ENCODE measurements at regions of chr14 and their contacts with region 1.

Region 1: GRCh38 chr14:93619176-93619793 is 169.0 kb downstream of the PRIMA1 start:
- DNase-seq: peak in 1 of 2 donors; percentile 45
- ATAC-seq: peak in 2 of 8 donors; percentile 42 to 44
- H3K4me3 ChIP-seq: no peak overlapping the region
- H3K27ac ChIP-seq: no peak overlapping the region
- H3K4me1 ChIP-seq: no peaks in the 10 kb centered on the region
- H3K27me3 ChIP-seq: peaks cover 0 to 12% (median 0%) of the 10 kb centered on the region in 7 donors
- CTCF ChIP-seq: peak in 8 of 9 donors; percentile 14 to 76 (median 61)

Region 2: DNA sequence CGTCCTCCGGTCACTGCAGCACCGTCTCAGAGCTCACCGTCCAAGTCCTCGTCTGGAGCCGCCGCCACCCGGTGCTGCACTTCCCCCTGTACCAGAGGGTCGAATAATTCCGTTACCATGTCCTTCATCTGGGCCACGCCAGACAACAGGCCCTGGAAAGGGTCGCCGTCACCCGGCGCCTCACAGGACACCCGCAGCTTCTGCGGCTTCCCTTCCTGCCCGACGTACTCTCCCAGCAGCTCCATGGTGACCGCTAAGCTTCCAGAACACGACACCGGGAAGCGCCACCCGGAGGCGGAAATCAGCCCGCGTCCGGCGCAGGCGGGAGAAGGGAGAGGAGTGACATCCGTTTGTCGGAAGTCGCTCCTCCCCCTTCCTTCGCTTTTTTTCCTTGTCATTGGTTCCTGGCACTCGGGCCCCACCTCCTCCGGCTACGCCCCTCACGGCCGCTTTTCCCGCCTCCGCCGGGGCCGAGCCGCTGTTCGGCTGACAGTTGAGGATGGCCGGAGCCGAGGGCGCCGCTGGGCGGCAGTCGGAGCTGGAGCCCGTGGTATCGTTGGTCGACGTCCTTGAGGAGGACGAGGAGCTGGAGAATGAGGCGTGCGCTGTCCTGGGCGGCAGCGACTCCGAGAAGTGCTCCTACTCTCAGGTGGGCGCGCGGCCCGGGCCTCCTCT is 412.4 kb before region 1 on chr14 and contains the starts of genes GON7 and UBR7:
- intact Hi-C with region 1: loop called in 4 of 10 experiments (anchors 2 to 10 kb)
- DNase-seq: peak; percentile 94 to 97
- ATAC-seq: peak; percentile 98 to 99 (median 99)
- H3K4me3 ChIP-seq: peak within 1 kb of the TSS; percentile 58 to 98 (median 85)
- H3K27ac ChIP-seq: peak within 1 kb of the TSS; percentile 38 to 93 (median 89)
- H3K4me1 ChIP-seq: peaks cover 0 to 44% (median 27%) of the 10 kb centered on the region in 9 donors
- H3K27me3 ChIP-seq: no peaks in the 10 kb centered on the region
- CTCF ChIP-seq: peak in 6 of 9 donors; percentile 21 to 54 (median 42)
- total RNA-seq, gene GON7: 9.9 to 20.1 (median 14.3) TPM
- total RNA-seq, gene UBR7: 17.7 to 28.3 (median 21.1) TPM

Region 3: GRCh38 chr14:93219103-93219726 is 400.1 kb before region 1 on chr14:
- intact Hi-C with region 1: loop called in 3 of 10 experiments (anchors 10 kb)
- DNase-seq: peak in 1 of 2 donors; percentile 28
- ATAC-seq: peak in 4 of 8 donors; percentile 33 to 63 (median 59)
- H3K4me3 ChIP-seq: no peak overlapping the region
- H3K27ac ChIP-seq: no peak overlapping the region
- H3K4me1 ChIP-seq: no peaks in the 10 kb centered on the region
- H3K27me3 ChIP-seq: no peaks in the 10 kb centered on the region
- CTCF ChIP-seq: peak in 8 of 9 donors; percentile 18 to 64 (median 57)

Region 4: GRCh38 chr14:93231129-93231979 is 387.9 kb before region 1 on chr14:
- intact Hi-C with region 1: loop called in 3 of 10 experiments (anchors 10 kb)
- DNase-seq: peak; percentile 21 to 25
- ATAC-seq: peak; percentile 46 to 78 (median 68)
- H3K4me3 ChIP-seq: peak overlapping the region; percentile 7 to 62 (median 52)
- H3K27ac ChIP-seq: no peak overlapping the region
- H3K4me1 ChIP-seq: peaks cover 0 to 14% (median 6%) of the 10 kb centered on the region in 9 donors
- H3K27me3 ChIP-seq: peaks cover 0 to 4% (median 0%) of the 10 kb centered on the region in 7 donors
- CTCF ChIP-seq: no peak

Region 5: DNA sequence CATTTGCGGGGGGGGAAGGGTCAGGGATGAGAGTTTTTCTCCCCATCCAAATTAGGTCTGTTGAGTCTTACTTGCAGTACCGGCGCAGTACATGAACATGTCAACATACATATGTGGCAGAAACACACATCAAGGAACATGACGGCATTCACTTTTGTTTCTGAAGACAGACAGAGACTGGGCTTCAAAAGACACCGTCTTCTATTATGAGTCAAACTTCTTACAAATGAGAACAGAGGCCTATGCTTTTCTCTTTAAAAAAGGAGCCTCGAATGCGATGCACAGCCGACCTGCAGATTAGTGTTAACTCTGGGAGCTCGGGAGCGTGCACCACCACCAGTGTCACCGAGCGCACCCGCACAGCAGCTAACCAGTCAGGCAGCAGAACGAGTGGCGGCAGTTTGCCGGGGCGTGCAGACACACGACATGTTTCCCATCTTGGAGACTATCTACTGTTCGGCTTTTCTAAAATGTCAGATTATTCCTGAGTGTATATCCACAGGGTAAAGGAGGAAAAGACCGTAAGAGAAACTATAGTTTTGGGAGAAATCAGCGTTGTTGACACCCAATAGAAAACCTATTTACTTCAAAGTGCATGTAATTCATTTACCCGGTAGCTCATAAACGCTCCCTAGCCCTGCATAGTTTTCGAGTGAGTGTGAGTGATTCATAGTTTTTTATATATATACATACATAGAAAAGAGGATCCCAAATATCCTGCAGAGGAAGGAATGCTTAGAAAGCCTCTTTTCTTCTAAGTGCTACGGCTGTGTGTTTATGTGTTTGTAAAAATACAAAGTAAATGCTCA is 379.2 kb before region 1 on chr14:
- intact Hi-C with region 1: loop called in 4 of 10 experiments (anchors 10 kb)
- DNase-seq: no peak
- ATAC-seq: no peak
- H3K4me3 ChIP-seq: no peak overlapping the region
- H3K27ac ChIP-seq: no peak overlapping the region
- H3K4me1 ChIP-seq: no peaks in the 10 kb centered on the region
- H3K27me3 ChIP-seq: no peaks in the 10 kb centered on the region
- CTCF ChIP-seq: no peak